Colonic mucosa (tissue), 4 donors: ENCODE measurements at regions of chr15 and their contacts with region 1.

Region 1: DNA sequence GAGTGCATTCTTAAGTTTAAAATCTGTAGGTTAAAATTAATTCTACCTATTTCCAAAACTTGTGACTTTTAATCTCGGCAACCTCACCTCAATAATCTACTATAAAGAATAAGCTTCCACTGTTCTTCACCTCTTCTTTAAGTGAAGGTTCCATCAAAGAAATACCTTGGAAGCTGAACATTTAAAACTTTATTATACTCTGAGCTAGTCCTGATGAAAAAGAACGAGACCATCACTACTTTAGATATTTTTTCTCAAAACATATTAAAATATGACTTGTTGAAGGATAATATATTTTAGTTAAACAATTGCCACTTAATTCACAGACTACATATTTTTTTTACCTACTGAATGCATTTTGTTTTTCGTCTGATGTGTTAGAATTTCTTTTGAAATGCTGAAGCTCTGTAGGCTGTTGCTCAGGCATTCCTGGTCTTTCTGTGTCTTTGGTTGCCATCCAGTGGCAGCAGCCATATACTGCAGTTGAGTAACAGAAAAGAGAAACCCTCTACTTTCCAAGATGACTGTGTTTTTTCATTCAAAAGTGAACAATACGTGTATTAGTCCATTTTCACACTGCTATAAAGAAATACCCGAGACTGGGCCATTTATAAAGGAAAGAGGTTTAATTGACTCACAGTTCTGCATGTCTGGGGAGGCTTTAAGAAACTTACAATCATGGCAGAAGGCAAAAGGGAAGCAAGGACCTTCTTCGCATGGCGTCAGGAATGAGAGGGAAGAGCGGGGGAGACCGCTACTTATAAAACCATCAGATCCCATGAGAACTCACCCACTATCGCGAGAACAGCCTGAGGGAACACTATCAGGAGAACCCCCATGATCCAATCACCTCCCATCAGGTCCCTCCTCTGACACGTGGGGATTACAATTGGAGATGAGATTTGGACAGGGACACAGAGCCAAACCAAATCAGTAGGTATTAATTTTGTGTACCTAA is 4.5 kb upstream of the GOLGA8B start:
- DNase-seq: peak; percentile 63
- H3K4me3 ChIP-seq: no peak overlapping the region
- H3K27ac ChIP-seq: no peak overlapping the region
- H3K4me1 ChIP-seq: no peaks in the 10 kb centered on the region
- H3K27me3 ChIP-seq: peaks cover 5% of the 10 kb centered on the region
- CTCF ChIP-seq: peak; percentile 77

Region 2: GRCh38 chr15:34065941-34066340 is 522.1 kb before region 1 on chr15:
- intact Hi-C with region 1: loop called (anchors 10 kb)
- DNase-seq: no peak
- H3K4me3 ChIP-seq: no peak overlapping the region
- H3K27ac ChIP-seq: no peak overlapping the region
- H3K4me1 ChIP-seq: no peaks in the 10 kb centered on the region
- H3K27me3 ChIP-seq: no peaks in the 10 kb centered on the region
- CTCF ChIP-seq: no peak

Region 3: GRCh38 chr15:34514251-34514670 is 73.7 kb before region 1 on chr15:
- intact Hi-C with region 1: loop called (anchors 5 kb)
- DNase-seq: no peak
- H3K4me3 ChIP-seq: peak overlapping the region; percentile 55
- H3K27ac ChIP-seq: peak overlapping the region; percentile 23
- H3K4me1 ChIP-seq: no peaks in the 10 kb centered on the region
- H3K27me3 ChIP-seq: peaks cover 19% of the 10 kb centered on the region
- CTCF ChIP-seq: no peak

Region 4: GRCh38 chr15:34637305-34637704 is 49.3 kb after region 1 on chr15:
- intact Hi-C with region 1: no loop called
- DNase-seq: no peak
- H3K4me3 ChIP-seq: no peak overlapping the region
- H3K27ac ChIP-seq: no peak overlapping the region
- H3K4me1 ChIP-seq: no peaks in the 10 kb centered on the region
- H3K27me3 ChIP-seq: no peaks in the 10 kb centered on the region
- CTCF ChIP-seq: no peak